Activated T-helper 2 cell treated with anti-CD3 and anti-CD28 coated beads, Interferon-gamma antibody, Interleukin-2, Interleukin-4, amounts not matched to agents 10 μg/mL and 5 μg/mL and 100 μg/mL, durations not matched to agents 14 hours and 24 hours and 36 hours (primary cell): ENCODE measurements at regions of chr15 and their contacts with region 1.

Region 1: GRCh38 chr15:91469632-91470567 is 369.8 kb downstream of the SV2B start:
- DNase-seq: peak; percentile 38
- H3K4me3 Mint-ChIP-seq: peak overlapping the region; percentile 30
- H3K27ac Mint-ChIP-seq: peak overlapping the region; percentile 37
- H3K4me1 Mint-ChIP-seq: peaks cover 37% of the 10 kb centered on the region
- H3K27me3 Mint-ChIP-seq: peaks cover 13% of the 10 kb centered on the region

Region 2: DNA sequence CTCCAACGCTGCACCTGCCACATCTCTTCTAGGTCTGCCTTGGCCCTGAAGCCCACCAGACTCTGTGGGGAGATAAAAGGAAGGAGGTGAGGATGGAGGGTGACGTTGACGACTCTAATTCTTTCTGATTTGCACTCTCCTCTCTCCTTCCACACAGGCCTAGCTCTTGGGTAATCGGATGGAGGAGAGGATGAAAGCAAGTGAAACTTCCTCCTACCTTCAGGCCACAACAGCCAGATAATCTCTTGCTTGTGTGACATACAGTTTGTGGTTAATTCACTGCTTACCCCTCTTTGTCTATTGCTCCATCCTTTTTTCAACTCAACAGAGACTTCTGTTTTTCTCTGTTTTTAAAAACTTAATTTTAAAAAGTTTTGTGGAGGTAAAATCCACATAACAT is 161.7 kb before region 1 on chr15:
- intact Hi-C with region 1: loop called (anchors 2 kb)
- DNase-seq: no peak
- H3K4me3 Mint-ChIP-seq: no peak overlapping the region
- H3K27ac Mint-ChIP-seq: no peak overlapping the region
- H3K4me1 Mint-ChIP-seq: peaks cover 34% of the 10 kb centered on the region
- H3K27me3 Mint-ChIP-seq: peaks cover 63% of the 10 kb centered on the region

Region 3: GRCh38 chr15:91752081-91752785 is 282.3 kb after region 1 on chr15:
- intact Hi-C with region 1: no loop called
- DNase-seq: no peak
- H3K4me3 Mint-ChIP-seq: no peak overlapping the region
- H3K27ac Mint-ChIP-seq: no peak overlapping the region
- H3K4me1 Mint-ChIP-seq: no peaks in the 10 kb centered on the region
- H3K27me3 Mint-ChIP-seq: peaks cover 2% of the 10 kb centered on the region